ENCODE measurements at regions of chr1 and their contacts with region 1.

Region 1: DNA sequence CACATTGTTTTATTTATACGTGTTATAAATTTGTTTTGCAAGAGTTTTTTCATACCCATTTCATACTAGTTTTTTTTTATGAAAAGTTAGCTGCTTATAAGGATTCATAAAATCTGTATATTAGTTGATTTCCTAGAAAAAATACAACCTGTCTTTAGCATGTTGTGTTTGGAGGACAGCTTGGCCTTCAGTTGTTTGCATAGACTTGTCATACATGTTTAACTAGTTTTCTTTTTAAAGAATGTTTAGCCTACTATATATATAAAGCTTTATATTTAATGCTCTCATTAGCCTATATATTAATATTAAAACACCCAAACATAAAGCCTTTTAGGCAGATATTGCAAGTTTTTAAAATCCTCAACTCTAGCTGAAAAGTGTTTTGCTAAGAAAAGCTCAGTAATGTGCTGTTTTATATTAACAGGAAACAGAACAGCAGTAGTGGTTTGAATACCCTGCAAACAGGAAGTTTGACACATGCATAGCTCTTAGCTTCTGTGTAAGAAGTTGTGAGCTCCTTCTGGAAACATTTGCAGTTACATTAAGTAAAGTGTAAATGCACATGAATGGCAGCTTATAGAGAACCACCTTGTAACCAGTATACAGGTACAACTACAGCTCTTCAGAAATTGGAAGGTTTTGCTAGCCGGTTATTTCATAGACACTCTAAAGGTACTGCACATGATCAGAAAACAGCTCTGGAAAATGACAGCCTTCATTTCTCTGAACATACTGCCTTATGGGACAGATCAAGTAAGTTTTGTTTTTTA is at the start of gene PRKACB:
- DNase-seq: no peak
- H3K4me3 ChIP-seq: no peak within 1 kb of the TSS
- H3K27ac ChIP-seq: no peak within 1 kb of the TSS
- H3K4me1 ChIP-seq: peaks cover 7% of the 10 kb centered on the region; the same call in 1 of the 2 replicates
- H3K27me3 ChIP-seq: no peaks in the 10 kb centered on the region
- CTCF ChIP-seq: no peak
- total RNA-seq, gene PRKACB: 16.1 and 16.7 TPM in 2 replicates

Region 2: GRCh38 chr1:84260864-84261518 is 117.0 kb after region 1 on chr1:
- CTCF ChIA-PET with region 1: no interaction called
- POLR2A ChIA-PET with region 1: no interaction called
- intact Hi-C with region 1: no loop called
- DNase-seq: peak; percentile 21 to 87
- H3K4me3 ChIP-seq: no peak overlapping the region
- H3K27ac ChIP-seq: peak overlapping the region; percentile 71
- H3K4me1 ChIP-seq: peaks cover 21% of the 10 kb centered on the region
- H3K27me3 ChIP-seq: no peaks in the 10 kb centered on the region
- CTCF ChIP-seq: no peak

Region 3: DNA sequence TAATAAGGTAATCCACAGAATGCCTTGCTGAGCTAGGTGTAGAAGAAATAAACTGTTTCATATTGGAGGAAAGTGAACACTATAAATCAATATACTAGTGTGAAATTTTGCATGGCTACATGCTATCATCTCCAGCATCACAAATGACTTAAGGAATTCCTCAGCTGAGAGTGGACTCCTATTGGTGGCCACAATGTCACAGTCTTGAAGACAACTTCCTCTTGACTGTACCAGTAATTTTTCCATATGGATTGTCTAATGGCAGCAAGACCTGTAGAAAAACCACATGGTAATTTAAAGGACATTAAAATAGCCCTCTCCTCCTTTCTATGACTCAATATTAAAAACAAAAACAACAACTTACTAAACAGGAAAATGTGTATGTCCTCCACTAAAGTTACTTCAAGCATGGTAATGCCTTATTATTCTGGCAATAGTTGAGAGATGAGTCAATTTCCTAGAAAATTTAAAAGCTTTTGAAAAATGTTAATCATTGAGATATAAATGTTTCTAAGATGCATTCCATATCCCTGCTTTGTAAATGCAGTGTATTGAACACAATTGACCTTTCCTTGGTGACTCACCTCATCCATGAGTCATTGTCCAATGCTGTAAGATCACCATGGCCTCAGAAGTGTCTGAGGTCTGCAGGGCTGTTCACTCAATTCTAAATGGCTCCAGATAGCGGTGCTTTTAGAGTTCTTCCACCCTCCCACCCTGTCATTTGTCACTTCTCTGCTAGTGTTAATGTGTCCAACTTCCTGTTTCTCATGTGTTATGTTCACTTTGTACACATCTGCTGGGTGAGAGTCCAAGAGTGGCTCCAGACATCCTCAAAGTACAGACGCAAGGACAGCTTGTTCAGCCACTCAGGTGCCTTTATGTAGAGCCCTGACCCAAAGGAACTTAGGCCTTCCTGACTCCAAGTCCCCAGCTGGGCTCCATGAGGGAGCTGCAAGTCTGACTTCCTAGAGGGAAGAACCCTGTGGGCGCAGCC is 221.5 kb after region 1 on chr1:
- CTCF ChIA-PET with region 1: no interaction called
- POLR2A ChIA-PET with region 1: no interaction called
- intact Hi-C with region 1: loop called (anchors 5 kb)
- DNase-seq: peak; percentile 58 to 99
- H3K4me3 ChIP-seq: no peak overlapping the region
- H3K27ac ChIP-seq: peak overlapping the region; percentile 59
- H3K4me1 ChIP-seq: peaks cover 36% of the 10 kb centered on the region
- H3K27me3 ChIP-seq: no peaks in the 10 kb centered on the region
- CTCF ChIP-seq: no peak

Region 4: DNA sequence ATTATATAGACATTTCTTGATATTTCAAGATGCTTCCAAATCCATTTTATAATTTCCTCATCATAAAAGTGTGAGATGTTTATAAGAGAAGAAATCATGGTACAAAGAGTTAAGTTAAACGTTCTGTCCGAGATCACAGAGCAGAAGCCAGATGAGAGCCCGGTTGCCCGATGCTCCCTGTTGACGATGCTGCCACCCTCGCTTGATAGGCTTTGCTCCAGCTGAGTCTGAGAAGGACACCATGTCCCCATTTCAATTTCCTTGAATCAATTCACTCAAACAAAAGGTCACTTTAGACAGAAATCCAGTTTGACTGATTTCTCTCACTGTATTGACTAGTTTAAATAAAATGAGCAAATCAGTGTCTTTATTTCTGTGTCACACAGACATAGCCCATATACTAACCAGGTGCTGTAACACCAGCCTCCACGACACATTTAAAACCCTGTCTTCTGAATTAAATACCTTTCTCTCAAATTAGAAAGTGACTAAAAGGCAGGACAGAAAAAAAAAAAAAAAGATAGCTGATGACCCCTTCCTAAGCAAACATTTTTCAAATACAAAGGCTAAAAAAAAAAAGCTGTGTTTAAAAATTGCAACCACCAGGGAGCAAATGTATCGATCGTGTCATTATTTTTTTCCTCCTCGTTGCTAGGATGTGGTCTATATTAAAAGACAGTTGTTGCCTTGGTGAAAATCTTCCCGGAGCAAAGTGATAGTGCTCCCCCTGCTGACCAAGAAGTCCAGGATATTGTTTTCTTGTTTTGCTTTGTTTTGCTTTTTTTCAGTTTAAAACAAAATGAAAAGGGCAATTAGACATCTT is 289.5 kb after region 1 on chr1:
- CTCF ChIA-PET with region 1: interaction called, 4 read pairs
- POLR2A ChIA-PET with region 1: no interaction called
- intact Hi-C with region 1: loop called (anchors 1 kb)
- DNase-seq: peak; percentile 43 to 79
- H3K4me3 ChIP-seq: peak overlapping the region; percentile 14; the same call in 1 of the 2 replicates
- H3K27ac ChIP-seq: no peak overlapping the region
- H3K4me1 ChIP-seq: peaks cover 17% of the 10 kb centered on the region
- H3K27me3 ChIP-seq: no peaks in the 10 kb centered on the region
- CTCF ChIP-seq: peak; percentile 93

Region 5: DNA sequence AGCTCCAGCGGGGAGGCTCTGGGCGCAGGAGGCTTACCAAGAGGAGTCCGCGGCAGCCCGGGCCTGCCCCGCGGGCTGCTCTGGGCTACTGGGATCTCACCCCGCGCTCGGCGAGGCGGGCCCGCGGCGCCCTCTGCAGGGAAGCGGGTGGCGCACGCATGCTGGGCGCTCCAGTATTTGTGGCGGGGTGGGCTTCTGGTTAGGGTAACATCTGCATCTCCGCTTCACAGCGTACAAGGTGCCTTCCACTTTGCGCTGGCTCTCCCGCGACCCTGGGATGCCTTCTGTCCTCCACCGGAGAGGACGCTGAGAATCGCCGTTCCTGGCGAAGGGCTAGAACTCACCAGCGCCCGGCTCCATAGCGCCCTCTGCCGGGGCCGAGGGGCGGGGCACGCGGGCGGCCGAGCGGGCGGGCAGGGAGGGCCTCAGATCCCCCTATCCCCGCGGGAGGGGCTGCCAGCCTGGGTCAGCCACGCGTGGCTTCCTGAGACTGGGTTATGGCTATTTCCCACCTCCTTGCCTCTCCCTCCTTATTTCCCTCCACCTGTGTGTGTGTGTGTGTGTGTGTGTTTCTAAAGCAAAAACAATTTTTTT is 476.8 kb after region 1 on chr1:
- CTCF ChIA-PET with region 1: no interaction called
- POLR2A ChIA-PET with region 1: interaction called, 4 read pairs
- intact Hi-C with region 1: loop called (anchors 2 kb)
- DNase-seq: peak; percentile 56 to 86
- H3K4me3 ChIP-seq: peak overlapping the region; percentile 75
- H3K27ac ChIP-seq: peak overlapping the region; percentile 29
- H3K4me1 ChIP-seq: peaks cover 10% of the 10 kb centered on the region
- H3K27me3 ChIP-seq: no peaks in the 10 kb centered on the region
- CTCF ChIP-seq: peak; percentile 97

Region 6: GRCh38 chr1:84772428-84772943 is 628.5 kb after region 1 on chr1:
- CTCF ChIA-PET with region 1: no interaction called
- POLR2A ChIA-PET with region 1: no interaction called
- intact Hi-C with region 1: loop called (anchors 5 kb)
- DNase-seq: peak; percentile 53 to 65
- H3K4me3 ChIP-seq: no peak overlapping the region
- H3K27ac ChIP-seq: no peak overlapping the region
- H3K4me1 ChIP-seq: no peaks in the 10 kb centered on the region
- H3K27me3 ChIP-seq: no peaks in the 10 kb centered on the region
- CTCF ChIP-seq: peak; percentile 98

Measured in PC-9 (cell line).